AG04450 (cell line): ENCODE measurements at regions of chr11 and their contacts with region 1.

Region 1: DNA sequence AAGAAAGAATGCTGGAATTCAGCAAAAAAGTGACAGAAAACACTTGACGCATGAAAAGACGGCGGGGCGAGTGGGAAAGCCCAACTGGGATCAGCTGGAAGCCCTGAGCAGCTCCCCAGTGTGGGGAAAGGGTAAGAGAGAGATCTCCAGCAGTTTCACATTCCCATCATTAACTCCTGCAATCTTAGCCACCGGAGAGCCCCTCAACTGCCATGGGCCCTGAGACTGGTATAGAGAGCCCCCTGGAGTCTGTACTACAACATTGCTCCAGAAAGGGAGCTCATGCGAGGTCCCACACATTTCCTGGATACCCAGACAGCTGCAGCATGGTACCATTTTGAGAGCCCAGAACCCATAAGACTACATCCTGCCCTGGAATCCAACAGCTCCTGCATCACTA is 31.1 kb downstream of the MRGPRX4 start:
- DNase-seq: no peak
- H3K4me3 ChIP-seq: no peak overlapping the region
- H3K27ac ChIP-seq: no peak overlapping the region
- H3K27me3 ChIP-seq: peaks cover 1% of the 10 kb centered on the region
- CTCF ChIP-seq: peak; percentile 58

Region 2: GRCh38 chr11:17991783-17992433 is 211.8 kb before region 1 on chr11:
- CTCF ChIA-PET with region 1: interaction called, 40 read pairs
- POLR2A ChIA-PET with region 1: no interaction called
- DNase-seq: peak; percentile 36
- H3K4me3 ChIP-seq: no peak overlapping the region
- H3K27ac ChIP-seq: no peak overlapping the region
- H3K27me3 ChIP-seq: no peaks in the 10 kb centered on the region
- CTCF ChIP-seq: peak; percentile 92

Region 3: DNA sequence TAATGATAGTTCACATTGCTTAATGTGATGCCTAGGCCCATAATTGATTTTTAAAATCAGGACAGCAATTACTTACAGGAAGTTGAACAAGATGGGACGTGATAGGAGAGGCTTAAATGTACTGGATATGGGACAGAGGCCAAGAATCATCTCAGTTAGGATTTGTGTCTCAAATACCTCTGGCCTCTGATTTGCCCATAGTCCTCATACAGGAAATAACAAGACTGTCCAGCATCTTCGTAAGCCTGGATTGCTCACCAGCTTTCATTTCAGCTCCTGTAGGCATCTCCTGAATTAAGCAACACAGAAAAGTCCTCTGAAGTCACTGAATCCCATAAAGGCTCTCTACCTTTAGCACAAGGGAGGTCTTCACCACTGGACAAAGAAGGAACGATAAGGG is 71.4 kb before region 1 on chr11 and contains the start of gene MRGPRX3:
- CTCF ChIA-PET with region 1: no interaction called
- POLR2A ChIA-PET with region 1: no interaction called
- DNase-seq: no peak
- H3K4me3 ChIP-seq: no peak within 1 kb of the TSS
- H3K27ac ChIP-seq: no peak within 1 kb of the TSS
- H3K27me3 ChIP-seq: no peaks in the 10 kb centered on the region
- CTCF ChIP-seq: no peak
- polyA plus RNA-seq, gene MRGPRX3: not detected in 2 replicates